IMR-90 (cell line): ENCODE measurements at regions of chr6 and their contacts with region 1.

Region 1: DNA sequence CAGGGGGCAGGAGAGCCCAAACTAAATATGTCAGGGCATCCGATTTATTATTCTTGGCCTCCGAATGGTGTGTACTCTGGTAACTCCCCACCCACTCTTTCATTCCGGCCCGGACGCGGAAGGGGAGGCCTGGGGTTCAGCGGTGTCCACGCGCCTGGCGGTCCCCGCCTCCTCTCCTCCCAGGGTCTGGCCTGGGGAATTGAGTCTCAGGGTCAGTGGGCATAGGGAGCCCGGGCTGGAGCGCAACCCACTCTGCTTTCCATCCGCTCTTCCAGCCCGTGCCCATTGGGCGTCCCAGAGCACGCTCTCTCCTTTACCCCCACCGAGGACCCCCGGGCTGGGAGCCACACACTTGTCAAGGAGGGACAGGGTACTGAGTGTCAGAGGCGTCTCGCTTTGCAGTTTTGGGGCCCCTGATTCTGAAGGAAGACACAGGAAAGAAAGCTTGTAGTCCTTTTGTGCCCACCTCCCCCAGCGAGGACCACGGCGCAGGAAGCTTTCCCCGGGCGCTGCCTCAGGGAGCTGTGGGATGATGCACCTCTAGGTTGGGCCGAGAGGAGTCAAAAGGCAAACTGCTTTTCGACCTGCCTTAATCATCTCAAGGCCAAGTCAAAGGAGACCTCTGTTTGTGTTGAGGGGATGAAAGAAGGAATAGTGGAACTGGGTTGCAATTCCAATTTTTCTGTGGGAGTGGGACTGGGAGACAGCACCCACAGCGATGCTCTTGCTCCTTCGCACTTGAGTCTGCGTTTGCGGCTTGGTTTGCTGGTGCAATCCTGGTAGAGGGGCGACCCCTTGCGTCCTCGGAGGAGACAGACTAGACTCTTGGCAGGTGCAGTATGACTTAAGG is 2.5 kb downstream of the RSPO3 start:
- DNase-seq: peak; percentile 79
- ATAC-seq: peak; percentile 78
- H3K4me3 ChIP-seq: no peak overlapping the region
- H3K27ac ChIP-seq: no peak overlapping the region
- H3K4me1 ChIP-seq: no peaks in the 10 kb centered on the region; the same call in 1 of the 2 replicates
- H3K27me3 ChIP-seq: peaks cover 42% of the 10 kb centered on the region
- CTCF ChIP-seq: peak; percentile 88
- POLR2A ChIP-seq: no peak
- RAD21 ChIP-seq: peak; percentile 95

Region 2: DNA sequence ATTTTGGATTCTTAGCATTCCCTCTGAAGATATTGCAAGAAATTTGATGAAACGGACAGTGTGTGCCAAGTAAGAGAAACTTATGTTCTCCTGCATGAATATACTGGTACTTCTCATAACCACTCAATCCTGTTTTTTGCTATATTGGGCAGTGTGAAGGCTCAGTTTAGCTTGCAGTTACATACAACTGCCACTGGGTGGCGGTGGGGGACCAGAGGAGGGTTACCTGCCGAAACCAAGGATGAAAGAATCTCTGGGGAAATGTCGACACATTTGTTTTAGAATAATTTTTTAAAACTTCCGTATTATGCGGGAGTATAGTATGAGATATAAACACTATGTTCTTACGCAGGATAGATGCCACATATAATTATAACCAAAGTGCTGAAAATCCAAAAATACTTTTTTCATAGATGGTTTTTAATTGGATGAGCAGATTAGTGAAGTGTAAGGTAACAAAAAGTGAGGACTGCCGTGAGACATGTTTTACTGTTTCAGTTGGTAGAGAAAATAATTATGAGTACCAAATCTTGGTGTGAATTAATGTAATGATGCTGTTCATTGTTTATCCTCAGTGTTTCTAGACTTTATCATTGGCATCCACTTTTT is 1124.9 kb before region 1 on chr6:
- CTCF ChIA-PET with region 1: no interaction called
- POLR2A ChIA-PET with region 1: no interaction called
- dilution Hi-C with region 1: no loop called
- in situ Hi-C with region 1: no loop called
- intact Hi-C with region 1: loop called (anchors 2 kb)
- DNase-seq: peak; percentile 60
- ATAC-seq: peak; percentile 98
- H3K4me3 ChIP-seq: no peak overlapping the region
- H3K27ac ChIP-seq: no peak overlapping the region
- H3K4me1 ChIP-seq: no peaks in the 10 kb centered on the region
- H3K27me3 ChIP-seq: no peaks in the 10 kb centered on the region
- CTCF ChIP-seq: peak; percentile 94
- POLR2A ChIP-seq: no peak
- RAD21 ChIP-seq: peak; percentile 91

Region 3: DNA sequence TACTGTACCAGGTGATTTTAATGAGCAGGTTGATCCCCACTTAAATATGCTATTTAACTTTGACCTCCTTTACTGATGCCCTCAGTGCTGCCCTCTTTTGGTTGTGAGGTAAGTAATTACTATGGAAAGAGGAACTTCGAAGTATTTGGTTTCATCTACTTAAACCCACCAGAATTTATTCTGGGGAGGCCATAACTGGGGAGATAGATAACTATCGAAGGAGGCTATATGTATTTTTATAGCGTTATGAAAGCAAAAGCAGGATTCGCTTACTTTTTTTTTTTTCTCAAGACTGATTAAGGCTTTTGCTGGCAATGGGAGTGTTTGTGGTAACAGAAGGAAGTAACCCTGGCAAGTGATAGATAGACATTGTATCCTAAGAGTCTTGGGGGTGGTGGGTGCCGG is 950.0 kb before region 1 on chr6:
- CTCF ChIA-PET with region 1: no interaction called
- POLR2A ChIA-PET with region 1: no interaction called
- dilution Hi-C with region 1: no loop called
- in situ Hi-C with region 1: no loop called
- intact Hi-C with region 1: loop called (anchors 10 kb)
- DNase-seq: peak; percentile 26
- ATAC-seq: 0 out of 2 replicates have a peak, but pooled peaks have one; percentile 35
- H3K4me3 ChIP-seq: no peak overlapping the region
- H3K27ac ChIP-seq: no peak overlapping the region
- H3K4me1 ChIP-seq: no peaks in the 10 kb centered on the region
- H3K27me3 ChIP-seq: peaks cover 12% of the 10 kb centered on the region
- CTCF ChIP-seq: peak; percentile 49
- POLR2A ChIP-seq: no peak
- RAD21 ChIP-seq: peak; percentile 38

Region 4: DNA sequence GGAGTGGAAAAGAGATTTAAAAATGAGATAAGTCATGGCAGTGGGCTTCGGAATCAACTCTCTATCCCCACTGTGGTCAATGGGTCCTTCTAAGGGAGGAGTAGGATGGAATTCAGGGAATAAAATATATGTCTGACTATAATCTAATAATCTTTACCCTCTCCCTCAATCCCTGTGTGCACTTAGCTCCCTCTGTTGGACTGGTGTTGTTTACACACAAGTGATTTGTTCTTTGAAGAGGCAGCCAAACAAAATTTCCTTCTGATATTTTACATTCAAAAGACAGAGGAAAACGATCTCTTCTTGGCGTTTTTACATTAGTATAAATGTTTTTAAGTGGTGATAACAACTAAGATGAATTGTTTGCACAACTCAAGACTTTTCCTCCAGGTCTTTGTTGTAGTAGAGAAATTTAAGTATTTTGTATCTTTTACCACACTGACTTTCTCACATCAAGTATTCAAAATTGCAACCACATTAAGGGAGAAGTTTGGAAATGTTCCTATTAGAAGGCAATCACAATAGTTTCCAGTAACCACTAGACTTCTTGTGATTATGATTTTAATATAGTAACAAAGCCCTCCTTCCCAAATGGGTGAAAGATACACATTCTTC is 463.3 kb before region 1 on chr6:
- CTCF ChIA-PET with region 1: no interaction called
- POLR2A ChIA-PET with region 1: no interaction called
- dilution Hi-C with region 1: no loop called
- in situ Hi-C with region 1: no loop called
- intact Hi-C with region 1: loop called (anchors 5 kb)
- DNase-seq: peak; percentile 44
- ATAC-seq: peak; percentile 62; the same call in 1 of the 2 replicates
- H3K4me3 ChIP-seq: no peak overlapping the region
- H3K27ac ChIP-seq: no peak overlapping the region
- H3K4me1 ChIP-seq: no peaks in the 10 kb centered on the region; the same call in 1 of the 2 replicates
- H3K27me3 ChIP-seq: no peaks in the 10 kb centered on the region
- CTCF ChIP-seq: peak; percentile 47
- POLR2A ChIP-seq: no peak
- RAD21 ChIP-seq: peak; percentile 51

Region 5: GRCh38 chr6:127186889-127187288 is 65.9 kb after region 1 on chr6:
- CTCF ChIA-PET with region 1: no interaction called
- POLR2A ChIA-PET with region 1: no interaction called
- dilution Hi-C with region 1: no loop called
- in situ Hi-C with region 1: no loop called
- intact Hi-C with region 1: loop called (anchors 5 kb)
- DNase-seq: no peak
- ATAC-seq: no peak
- H3K4me3 ChIP-seq: no peak overlapping the region
- H3K27ac ChIP-seq: no peak overlapping the region
- H3K4me1 ChIP-seq: no peaks in the 10 kb centered on the region
- H3K27me3 ChIP-seq: no peaks in the 10 kb centered on the region; the same call in 1 of the 2 replicates
- CTCF ChIP-seq: peak; percentile 37; the same call in 1 of the 2 replicates
- POLR2A ChIP-seq: no peak
- RAD21 ChIP-seq: 0 out of 2 replicates have a peak, but pooled peaks have one; percentile 25